ENCODE measurements at regions of chr9 and their contacts with region 1.

Region 1: DNA sequence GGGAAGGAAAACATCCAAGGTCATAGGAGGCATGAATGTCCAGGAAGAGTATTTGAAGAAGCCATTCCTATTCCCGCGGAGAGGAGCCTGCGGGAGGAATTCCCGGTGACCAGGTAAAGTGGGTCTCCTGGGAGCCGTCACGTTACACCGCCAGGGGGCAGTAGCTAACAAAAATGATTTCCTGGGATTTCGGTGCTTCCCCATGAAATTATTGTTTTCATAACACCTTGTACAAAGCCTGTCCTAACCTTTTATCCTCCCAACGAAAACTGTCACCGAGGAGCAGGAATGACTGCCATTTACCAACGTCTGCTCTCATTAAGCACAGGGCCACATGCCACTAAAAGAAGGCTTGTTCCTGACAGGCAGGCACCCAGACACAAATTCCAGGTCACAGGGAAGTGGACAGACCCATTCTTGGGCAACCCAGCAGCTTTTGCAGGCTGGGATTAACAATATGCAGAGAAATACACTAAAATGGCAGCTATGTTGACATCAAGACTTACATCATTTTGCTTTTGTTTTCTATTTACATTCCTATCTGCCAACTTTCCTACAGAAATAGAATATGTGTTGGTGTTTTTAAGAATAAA is 41.2 kb upstream of the CTSL start:
- DNase-seq: peak; percentile 69 to 84 (median 76)
- ATAC-seq: peak; percentile 73
- H3K4me3 ChIP-seq: no peak overlapping the region
- H3K27ac ChIP-seq: peak overlapping the region in 3 of 4 donors; percentile 16 to 52 (median 20)
- H3K4me1 ChIP-seq: peaks cover 35% of the 10 kb centered on the region
- H3K27me3 ChIP-seq: no peaks in the 10 kb centered on the region
- CTCF ChIP-seq: peak; percentile 76 to 83 (median 80)
- POLR2A ChIP-seq: no peak

Region 2: GRCh38 chr9:87599901-87600610 is 84.7 kb before region 1 on chr9:
- intact Hi-C with region 1: no loop called
- DNase-seq: peak in 2 of 4 donors; percentile 34 to 38
- ATAC-seq: peak; percentile 54
- H3K4me3 ChIP-seq: no peak overlapping the region
- H3K27ac ChIP-seq: peak overlapping the region; percentile 50 to 62 (median 62)
- H3K4me1 ChIP-seq: peaks cover 68% of the 10 kb centered on the region
- H3K27me3 ChIP-seq: no peaks in the 10 kb centered on the region
- CTCF ChIP-seq: no peak
- POLR2A ChIP-seq: no peak

Region 3: DNA sequence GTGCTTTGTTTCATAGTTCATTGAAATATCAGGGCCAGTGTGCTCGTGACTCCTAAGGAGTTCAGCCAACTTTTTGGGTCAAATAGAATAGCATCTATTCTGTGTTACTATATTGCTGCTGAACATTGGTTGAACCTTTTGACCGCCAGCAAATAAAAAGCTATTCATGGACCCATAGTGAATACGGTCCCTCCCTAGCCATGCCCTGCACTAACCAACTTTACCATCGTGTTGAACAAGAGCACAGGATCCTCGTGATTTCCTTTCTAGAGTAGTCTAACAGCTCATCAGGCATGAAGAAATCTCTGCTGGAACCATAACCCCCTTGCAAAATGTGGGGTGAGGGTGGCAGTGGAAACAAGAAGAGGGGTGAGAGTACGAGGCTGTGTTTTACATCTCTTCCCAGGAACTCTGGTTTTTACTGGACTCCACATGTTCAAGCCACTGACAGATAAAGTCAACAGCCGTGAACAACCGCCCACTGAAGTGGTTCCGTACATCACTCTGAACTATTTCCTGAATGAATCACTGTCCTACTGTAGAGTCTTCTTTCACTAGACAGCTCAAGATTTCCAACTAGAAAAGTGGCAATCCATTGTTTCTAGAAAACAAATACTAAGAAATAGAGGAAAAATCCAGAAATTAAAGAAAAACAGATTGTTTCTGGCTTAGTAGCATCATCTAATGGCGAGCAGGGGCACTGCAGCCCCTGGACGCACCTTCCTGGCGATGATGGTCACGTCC is 127.8 kb after region 1 on chr9:
- intact Hi-C with region 1: loop called (anchors 5 kb)
- DNase-seq: peak in 3 of 4 donors; percentile 34 to 50 (median 37)
- ATAC-seq: peak; percentile 47
- H3K4me3 ChIP-seq: no peak overlapping the region
- H3K27ac ChIP-seq: no peak overlapping the region
- H3K4me1 ChIP-seq: no peaks in the 10 kb centered on the region
- H3K27me3 ChIP-seq: no peaks in the 10 kb centered on the region
- CTCF ChIP-seq: peak; percentile 77 to 97 (median 90)
- POLR2A ChIP-seq: no peak

Measured in body of pancreas (tissue), 4 donors.